ENCODE measurements at regions of chr4 and their contacts with region 1.

Region 1: DNA sequence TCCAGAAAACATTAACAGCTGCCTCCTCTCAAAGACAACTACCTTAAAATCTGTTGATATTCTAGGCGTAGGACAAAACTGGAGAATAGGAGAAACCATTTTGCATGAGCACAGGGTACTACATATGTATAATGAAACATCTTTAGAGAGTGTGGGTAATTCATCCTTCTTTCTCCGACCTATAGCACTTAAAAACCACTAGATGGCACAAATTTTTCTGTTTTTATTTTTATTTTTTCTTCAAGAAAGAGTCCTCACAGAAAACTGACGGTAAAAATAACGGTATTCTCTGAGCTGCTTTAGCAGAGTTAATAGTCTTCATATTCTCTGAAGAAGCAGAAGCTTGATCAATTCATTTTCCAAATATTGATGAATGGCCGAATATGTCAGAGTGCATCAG is 14.6 kb downstream of the SMIM31 start:
- DNase-seq: no peak
- ATAC-seq: peak; percentile 72
- H3K4me3 ChIP-seq: no peak overlapping the region
- H3K27ac ChIP-seq: no peak overlapping the region
- H3K4me1 ChIP-seq: no peaks in the 10 kb centered on the region
- H3K27me3 ChIP-seq: no peaks in the 10 kb centered on the region
- CTCF ChIP-seq: peak; percentile 29 to 41 (median 31); a peak in 5 of 6 replicates
- EP300 ChIP-seq: no peak
- POLR2A ChIP-seq: no peak
- RAD21 ChIP-seq: 0 out of 2 replicates have a peak, but pooled peaks have one; percentile 29

Region 2: DNA sequence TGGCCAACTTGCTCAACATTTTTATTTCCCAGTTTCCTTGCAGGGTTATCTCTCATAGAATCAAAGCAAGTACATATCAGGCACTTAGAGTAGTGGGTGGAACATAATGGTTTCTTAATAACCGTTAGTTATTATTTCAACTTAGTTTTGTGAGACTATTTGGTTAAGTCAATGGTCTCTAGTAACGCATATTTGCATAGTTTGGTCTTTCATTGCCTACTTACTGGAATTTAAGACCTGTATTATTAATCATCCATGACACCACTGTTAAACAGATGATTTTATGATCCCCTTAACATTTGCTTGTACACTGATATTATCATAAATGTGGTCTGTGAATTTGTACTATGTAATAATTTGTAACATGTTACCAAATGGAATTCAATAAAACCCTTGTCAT is 85.5 kb before region 1 on chr4:
- CTCF ChIA-PET with region 1: no interaction called
- POLR2A ChIA-PET with region 1: no interaction called
- RAD21 ChIA-PET with region 1: no interaction called
- SMC1A ChIA-PET with region 1: no interaction called
- in situ Hi-C with region 1: no loop called
- intact Hi-C with region 1: no loop called
- DNase-seq: no peak
- ATAC-seq: no peak
- H3K4me3 ChIP-seq: no peak overlapping the region
- H3K27ac ChIP-seq: no peak overlapping the region
- H3K4me1 ChIP-seq: no peaks in the 10 kb centered on the region
- H3K27me3 ChIP-seq: no peaks in the 10 kb centered on the region
- CTCF ChIP-seq: no peak
- EP300 ChIP-seq: no peak
- POLR2A ChIP-seq: no peak
- RAD21 ChIP-seq: no peak

Region 3: GRCh38 chr4:164716901-164717300 is 51.6 kb before region 1 on chr4:
- CTCF ChIA-PET with region 1: no interaction called
- POLR2A ChIA-PET with region 1: no interaction called
- RAD21 ChIA-PET with region 1: no interaction called
- SMC1A ChIA-PET with region 1: no interaction called
- in situ Hi-C with region 1: no loop called
- intact Hi-C with region 1: no loop called
- DNase-seq: no peak
- ATAC-seq: peak; percentile 83
- H3K4me3 ChIP-seq: no peak overlapping the region
- H3K27ac ChIP-seq: no peak overlapping the region
- H3K4me1 ChIP-seq: no peaks in the 10 kb centered on the region
- H3K27me3 ChIP-seq: no peaks in the 10 kb centered on the region
- CTCF ChIP-seq: peak; percentile 24 to 35 (median 32); a peak in 4 of 6 replicates
- EP300 ChIP-seq: no peak
- POLR2A ChIP-seq: no peak
- RAD21 ChIP-seq: no peak

Region 4: DNA sequence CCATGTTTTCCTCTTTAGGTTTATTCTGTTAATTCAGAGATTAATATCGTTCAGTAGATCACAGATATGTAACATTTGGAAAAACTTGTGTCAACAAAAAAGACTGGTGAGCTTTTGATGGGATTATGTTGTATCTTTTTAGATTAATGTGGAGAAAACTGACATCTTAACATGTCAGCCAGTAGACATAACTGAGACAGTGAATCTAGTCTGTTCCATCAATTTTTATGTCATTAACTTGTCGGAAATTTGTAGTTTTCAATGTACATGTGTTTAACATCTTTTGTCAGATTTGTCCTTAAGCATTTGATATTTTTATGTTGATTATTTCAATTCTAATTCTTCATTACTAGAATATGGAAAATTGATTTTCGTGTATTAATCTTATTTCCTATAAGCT is 150.4 kb after region 1 on chr4:
- CTCF ChIA-PET with region 1: interaction called, 8 read pairs
- POLR2A ChIA-PET with region 1: no interaction called
- RAD21 ChIA-PET with region 1: no interaction called
- SMC1A ChIA-PET with region 1: interaction called, 13 read pairs
- in situ Hi-C with region 1: loop called (anchors 10 kb)
- intact Hi-C with region 1: no loop called
- DNase-seq: no peak
- ATAC-seq: no peak
- H3K4me3 ChIP-seq: no peak overlapping the region
- H3K27ac ChIP-seq: no peak overlapping the region
- H3K4me1 ChIP-seq: no peaks in the 10 kb centered on the region
- H3K27me3 ChIP-seq: no peaks in the 10 kb centered on the region
- CTCF ChIP-seq: no peak
- EP300 ChIP-seq: no peak
- POLR2A ChIP-seq: no peak
- RAD21 ChIP-seq: no peak

Region 5: GRCh38 chr4:164997324-164997723 is 228.8 kb after region 1 on chr4:
- CTCF ChIA-PET with region 1: interaction called, 4 read pairs
- POLR2A ChIA-PET with region 1: no interaction called
- RAD21 ChIA-PET with region 1: no interaction called
- SMC1A ChIA-PET with region 1: no interaction called
- in situ Hi-C with region 1: no loop called
- intact Hi-C with region 1: loop called (anchors 1 kb)
- DNase-seq: no peak
- ATAC-seq: peak; percentile 63
- H3K4me3 ChIP-seq: no peak overlapping the region
- H3K27ac ChIP-seq: no peak overlapping the region
- H3K4me1 ChIP-seq: no peaks in the 10 kb centered on the region
- H3K27me3 ChIP-seq: no peaks in the 10 kb centered on the region
- CTCF ChIP-seq: peak; percentile 25 to 40 (median 31); a peak in 3 of 6 replicates
- EP300 ChIP-seq: no peak
- POLR2A ChIP-seq: no peak
- RAD21 ChIP-seq: peak; percentile 76

Region 6: GRCh38 chr4:165096776-165097175 is 328.3 kb after region 1 on chr4:
- CTCF ChIA-PET with region 1: interaction called, 28 read pairs
- POLR2A ChIA-PET with region 1: no interaction called
- RAD21 ChIA-PET with region 1: interaction called, 20 read pairs
- SMC1A ChIA-PET with region 1: interaction called, 7 read pairs
- in situ Hi-C with region 1: no loop called
- intact Hi-C with region 1: no loop called
- DNase-seq: no peak
- ATAC-seq: peak; percentile 33; the same call in 2 of the 3 replicates
- H3K4me3 ChIP-seq: no peak overlapping the region
- H3K27ac ChIP-seq: no peak overlapping the region
- H3K4me1 ChIP-seq: no peaks in the 10 kb centered on the region
- H3K27me3 ChIP-seq: no peaks in the 10 kb centered on the region
- CTCF ChIP-seq: peak in 2 of 3 experiments; percentile 48 to 54; a peak in 5 of 6 replicates
- EP300 ChIP-seq: no peak
- POLR2A ChIP-seq: no peak
- RAD21 ChIP-seq: peak; percentile 42

Measured in GM12878 (cell line).